HEK293 (cell line): ENCODE measurements at regions of chr9 and their contacts with region 1.

Region 1: GRCh38 chr9:132268725-132269352 is 85.9 kb downstream of the SETX start:
- H3K4me3 ChIP-seq: no peak overlapping the region
- H3K27ac ChIP-seq: no peak overlapping the region; the same call in 1 of the 2 replicates
- H3K4me1 ChIP-seq: no peaks in the 10 kb centered on the region
- CTCF ChIP-seq: peak; percentile 77; the same call in 1 of the 2 replicates

Region 2: GRCh38 chr9:131762356-131762932 is 506.4 kb before region 1 on chr9:
- CTCF ChIA-PET with region 1: interaction called, 82 read pairs
- POLR2A ChIA-PET with region 1: no interaction called
- H3K4me3 ChIP-seq: no peak overlapping the region
- H3K27ac ChIP-seq: no peak overlapping the region
- H3K4me1 ChIP-seq: no peaks in the 10 kb centered on the region
- CTCF ChIP-seq: peak; percentile 99

Region 3: GRCh38 chr9:132152231-132152630 is 116.6 kb before region 1 on chr9:
- CTCF ChIA-PET with region 1: no interaction called
- POLR2A ChIA-PET with region 1: no interaction called
- H3K4me3 ChIP-seq: no peak overlapping the region
- H3K27ac ChIP-seq: no peak overlapping the region
- H3K4me1 ChIP-seq: no peaks in the 10 kb centered on the region
- CTCF ChIP-seq: no peak

Region 4: GRCh38 chr9:132249123-132249522 is 19.7 kb before region 1 on chr9:
- CTCF ChIA-PET with region 1: interaction called, 32 read pairs
- POLR2A ChIA-PET with region 1: no interaction called
- H3K4me3 ChIP-seq: no peak overlapping the region
- H3K27ac ChIP-seq: no peak overlapping the region
- H3K4me1 ChIP-seq: no peaks in the 10 kb centered on the region; the same call in 1 of the 2 replicates
- CTCF ChIP-seq: no peak

Region 5: DNA sequence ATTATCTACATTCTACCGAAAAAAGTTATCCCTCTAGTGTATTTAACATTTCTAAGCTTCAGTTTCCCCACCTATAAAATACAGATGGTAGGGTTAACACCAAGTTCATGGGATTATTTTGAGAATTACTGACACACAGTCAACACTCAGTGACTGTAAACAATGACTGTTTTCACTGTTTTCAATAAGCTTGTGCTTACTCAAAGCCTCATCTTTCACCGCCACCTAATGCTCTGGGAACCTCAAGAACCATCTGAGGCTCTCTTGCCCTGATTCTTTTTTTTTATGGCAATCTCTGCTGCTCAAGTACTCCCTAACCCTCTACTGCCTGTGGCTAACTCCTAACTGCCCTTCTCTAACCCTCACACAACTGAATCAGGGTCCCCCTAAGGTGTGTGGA is 26.3 kb after region 1 on chr9:
- CTCF ChIA-PET with region 1: interaction called, 25 read pairs
- POLR2A ChIA-PET with region 1: no interaction called
- H3K4me3 ChIP-seq: no peak overlapping the region
- H3K27ac ChIP-seq: no peak overlapping the region
- H3K4me1 ChIP-seq: no peaks in the 10 kb centered on the region
- CTCF ChIP-seq: no peak

Region 6: DNA sequence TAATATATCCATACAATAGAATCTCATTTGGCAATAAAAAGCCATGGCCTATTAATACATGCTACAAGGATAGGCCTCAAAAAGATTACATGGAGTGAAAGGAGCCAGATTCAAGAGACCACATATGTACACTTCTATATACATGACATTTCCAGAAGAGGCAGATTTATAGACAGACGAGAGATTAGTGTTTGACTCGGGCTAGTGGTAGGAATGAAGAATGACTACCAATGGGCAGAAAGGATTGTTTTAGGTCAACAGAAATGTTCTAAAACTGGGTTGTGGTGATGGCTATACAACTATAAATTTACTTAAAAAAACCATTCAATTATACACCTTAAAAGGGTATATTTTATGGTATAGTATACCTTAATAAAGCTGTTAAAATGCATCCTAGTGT is 44.0 kb after region 1 on chr9:
- CTCF ChIA-PET with region 1: interaction called, 16 read pairs
- POLR2A ChIA-PET with region 1: no interaction called
- H3K4me3 ChIP-seq: no peak overlapping the region
- H3K27ac ChIP-seq: no peak overlapping the region
- H3K4me1 ChIP-seq: no peaks in the 10 kb centered on the region
- CTCF ChIP-seq: no peak